Right cardiac atrium (tissue), 5 donors: ENCODE measurements at regions of chr19 and their contacts with region 1.

Region 1: DNA sequence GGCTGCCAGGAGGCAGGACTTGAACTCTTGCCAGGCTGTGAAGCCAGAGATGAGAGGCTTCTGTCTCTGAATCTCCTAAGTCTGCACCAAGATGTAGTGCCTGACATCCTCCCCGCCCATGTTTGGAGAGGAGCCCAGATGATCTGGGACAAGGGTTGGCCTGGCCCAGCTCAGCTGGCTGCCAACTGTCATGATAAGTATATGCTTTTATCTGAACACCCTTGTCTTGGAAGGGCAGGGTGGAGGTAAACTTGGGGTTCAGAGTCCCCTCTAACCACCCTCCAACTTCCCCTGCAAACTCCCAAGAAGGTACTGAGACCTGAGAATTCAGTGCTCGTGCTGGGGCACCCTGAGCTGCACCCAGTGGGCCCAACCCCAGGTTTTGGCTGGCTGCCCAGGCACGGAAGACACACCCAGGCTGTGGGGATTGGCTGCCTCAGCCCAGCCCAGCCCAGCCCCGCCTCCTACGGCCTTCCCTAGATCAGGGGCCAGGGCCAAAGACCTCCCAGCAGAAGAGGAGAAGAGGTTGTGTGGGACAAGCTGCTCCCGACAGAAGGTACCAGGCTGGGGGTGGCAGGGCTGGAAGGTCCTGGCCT is at the start of gene CYP4F12:
- DNase-seq: peak; percentile 92 to 96 (median 96)
- ATAC-seq: peak; percentile 98
- H3K4me3 ChIP-seq: peak within 1 kb of the TSS; percentile 4
- H3K27ac ChIP-seq: peak within 1 kb of the TSS; percentile 57
- H3K4me1 ChIP-seq: peaks cover 4% of the 10 kb centered on the region
- H3K27me3 ChIP-seq: no peaks in the 10 kb centered on the region
- total RNA-seq, gene CYP4F12: 4.5 to 8.3 (median 7.8) TPM

Region 2: GRCh38 chr19:15584541-15585115 is 88.0 kb before region 1 on chr19:
- intact Hi-C with region 1: no loop called
- DNase-seq: peak; percentile 71 to 94 (median 91)
- ATAC-seq: peak; percentile 83 to 86
- H3K4me3 ChIP-seq: no peak overlapping the region
- H3K27ac ChIP-seq: no peak overlapping the region
- H3K4me1 ChIP-seq: no peaks in the 10 kb centered on the region
- H3K27me3 ChIP-seq: no peaks in the 10 kb centered on the region

Region 3: GRCh38 chr19:15779756-15780476 is 107.2 kb after region 1 on chr19:
- intact Hi-C with region 1: loop called in 1 of 4 experiments (anchors 5 kb)
- DNase-seq: peak; percentile 87 to 95 (median 93)
- ATAC-seq: peak; percentile 95 to 98
- H3K4me3 ChIP-seq: no peak overlapping the region
- H3K27ac ChIP-seq: peak overlapping the region; percentile 68
- H3K4me1 ChIP-seq: peaks cover 9% of the 10 kb centered on the region
- H3K27me3 ChIP-seq: no peaks in the 10 kb centered on the region

Region 4: GRCh38 chr19:15913830-15914229 is 241.2 kb after region 1 on chr19:
- intact Hi-C with region 1: no loop called
- DNase-seq: no peak
- ATAC-seq: no peak
- H3K4me3 ChIP-seq: no peak overlapping the region
- H3K27ac ChIP-seq: no peak overlapping the region
- H3K4me1 ChIP-seq: no peaks in the 10 kb centered on the region
- H3K27me3 ChIP-seq: no peaks in the 10 kb centered on the region